HCT116 (cell line): ENCODE measurements at regions of chr2 and their contacts with region 1.

Region 1: GRCh38 chr2:45778720-45779171 is 127.3 kb downstream of the PRKCE start:
- DNase-seq: peak; percentile 64
- ATAC-seq: peak; percentile 97
- H3K4me3 ChIP-seq: no peak overlapping the region
- H3K27ac ChIP-seq: no peak overlapping the region
- H3K4me1 ChIP-seq: peaks cover 0 to 17% of the 10 kb centered on the region in 2 experiments; a peak in 3 of 4 replicates
- H3K27me3 ChIP-seq: no peaks in the 10 kb centered on the region
- CTCF ChIP-seq: peak; percentile 75 to 80 (median 78)
- POLR2A ChIP-seq: no peak
- RAD21 ChIP-seq: peak; percentile 72

Region 2: GRCh38 chr2:45789961-45790723 is 11.4 kb after region 1 on chr2:
- CTCF ChIA-PET with region 1: interaction called, 28 read pairs
- POLR2A ChIA-PET with region 1: no interaction called
- RAD21 ChIA-PET with region 1: no interaction called
- intact Hi-C with region 1: no loop called
- DNase-seq: no peak
- ATAC-seq: no peak
- H3K4me3 ChIP-seq: no peak overlapping the region
- H3K27ac ChIP-seq: no peak overlapping the region
- H3K4me1 ChIP-seq: 0 out of 4 replicates have a peak, but pooled peaks cover 0 to 4% of the 10 kb centered on the region in 2 experiments
- H3K27me3 ChIP-seq: no peaks in the 10 kb centered on the region
- CTCF ChIP-seq: no peak
- POLR2A ChIP-seq: no peak
- RAD21 ChIP-seq: no peak

Region 3: DNA sequence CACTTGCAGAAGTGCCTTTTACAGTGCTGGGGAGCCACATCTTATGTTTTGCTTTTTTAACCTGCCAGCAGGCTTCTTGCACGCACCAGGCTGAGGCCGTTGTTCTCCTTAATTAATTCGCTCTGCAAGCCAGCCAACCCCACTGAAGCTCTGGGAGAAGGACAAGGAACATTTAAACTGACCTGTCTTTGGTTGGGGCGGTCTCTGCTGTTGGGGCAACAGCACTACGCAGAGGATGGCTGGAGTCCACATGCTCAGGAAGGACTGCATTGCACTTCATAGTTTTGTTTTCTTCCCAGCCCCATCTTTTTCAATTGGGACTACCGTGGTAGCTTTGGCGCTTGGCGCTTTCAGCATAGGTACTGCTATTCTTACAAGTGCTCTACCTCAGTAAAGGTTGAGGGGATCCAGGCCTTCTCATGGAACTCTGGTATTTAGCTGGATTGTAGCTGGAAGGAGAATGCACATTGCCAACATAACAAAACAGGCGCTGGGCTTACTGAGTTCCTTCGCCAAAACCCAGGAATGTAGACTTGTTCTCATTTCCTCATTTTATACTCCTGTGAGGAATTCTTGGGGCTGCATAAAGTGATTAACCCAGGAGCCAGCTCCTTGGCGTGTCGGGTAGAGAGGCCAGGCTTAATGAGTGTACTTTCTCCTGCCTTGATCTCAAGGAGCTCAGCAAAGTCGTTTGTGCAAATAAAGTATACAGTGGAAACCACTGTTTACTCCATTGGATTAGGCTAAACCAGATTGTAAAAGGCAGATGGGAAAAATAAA is 18.9 kb after region 1 on chr2:
- CTCF ChIA-PET with region 1: interaction called, 12 read pairs
- POLR2A ChIA-PET with region 1: no interaction called
- RAD21 ChIA-PET with region 1: no interaction called
- intact Hi-C with region 1: no loop called
- DNase-seq: no peak
- ATAC-seq: no peak
- H3K4me3 ChIP-seq: no peak overlapping the region
- H3K27ac ChIP-seq: no peak overlapping the region
- H3K4me1 ChIP-seq: 0 out of 4 replicates have a peak, but pooled peaks cover 0 to 4% of the 10 kb centered on the region in 2 experiments
- H3K27me3 ChIP-seq: no peaks in the 10 kb centered on the region
- CTCF ChIP-seq: no peak
- POLR2A ChIP-seq: no peak
- RAD21 ChIP-seq: no peak

Region 4: GRCh38 chr2:45935791-45936622 is 157.3 kb after region 1 on chr2:
- CTCF ChIA-PET with region 1: interaction called, 8 read pairs
- POLR2A ChIA-PET with region 1: no interaction called
- RAD21 ChIA-PET with region 1: no interaction called
- intact Hi-C with region 1: loop called (anchors 1 kb)
- DNase-seq: peak; percentile 97
- ATAC-seq: peak; percentile 77
- H3K4me3 ChIP-seq: peak overlapping the region in 1 of 2 experiments; percentile 24; a peak in 1 of 4 replicates
- H3K27ac ChIP-seq: peak overlapping the region; percentile 28; the same call in 1 of the 2 replicates
- H3K4me1 ChIP-seq: peaks cover 39 to 62% of the 10 kb centered on the region in 2 experiments
- H3K27me3 ChIP-seq: no peaks in the 10 kb centered on the region
- CTCF ChIP-seq: peak; percentile 68 to 86 (median 75)
- POLR2A ChIP-seq: no peak
- RAD21 ChIP-seq: peak; percentile 98

Region 5: GRCh38 chr2:45993476-45993991 is 214.8 kb after region 1 on chr2:
- CTCF ChIA-PET with region 1: no interaction called
- POLR2A ChIA-PET with region 1: no interaction called
- RAD21 ChIA-PET with region 1: no interaction called
- intact Hi-C with region 1: no loop called
- DNase-seq: peak; percentile 64
- ATAC-seq: peak; percentile 86
- H3K4me3 ChIP-seq: no peak overlapping the region
- H3K27ac ChIP-seq: no peak overlapping the region
- H3K4me1 ChIP-seq: peaks cover 0 to 21% of the 10 kb centered on the region in 2 experiments; a peak in 1 of 4 replicates
- H3K27me3 ChIP-seq: no peaks in the 10 kb centered on the region
- CTCF ChIP-seq: peak; percentile 58 to 82 (median 76); a peak in 5 of 6 replicates
- POLR2A ChIP-seq: no peak
- RAD21 ChIP-seq: peak; percentile 79